CD4-positive, alpha-beta memory T cell (primary cell): ENCODE measurements at regions of chr17 and their contacts with region 1.

Region 1: DNA sequence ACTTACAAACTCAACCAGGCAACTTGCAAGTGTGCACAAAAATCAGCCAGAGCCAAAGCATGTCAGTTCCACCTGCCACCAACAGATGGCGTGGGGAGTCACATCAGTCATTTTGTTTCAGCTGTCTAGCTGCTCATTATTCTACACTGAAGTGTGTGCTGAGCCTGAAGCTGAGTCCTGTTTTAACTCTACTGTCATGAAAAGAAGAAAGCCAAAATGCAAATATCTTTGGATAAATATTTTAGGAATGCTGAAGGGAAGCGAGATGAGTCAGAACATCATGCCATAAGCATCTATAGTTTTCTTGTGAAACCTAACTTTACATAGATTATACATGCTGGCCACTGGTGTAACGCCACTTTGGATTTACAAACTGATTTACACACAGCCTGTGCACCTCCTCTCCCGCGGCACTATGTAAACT is 172.6 kb downstream of the CDK5R1 start:
- DNase-seq: peak; percentile 38 to 49 (median 46)
- H3K4me3 ChIP-seq: no peak overlapping the region
- H3K4me3 Mint-ChIP-seq: no peak overlapping the region
- H3K27ac ChIP-seq: no peak overlapping the region
- H3K27ac Mint-ChIP-seq: no peak overlapping the region
- H3K4me1 ChIP-seq: no peaks in the 10 kb centered on the region
- H3K4me1 Mint-ChIP-seq: no peaks in the 10 kb centered on the region
- H3K27me3 ChIP-seq: no peaks in the 10 kb centered on the region
- H3K27me3 Mint-ChIP-seq: no peaks in the 10 kb centered on the region

Region 2: DNA sequence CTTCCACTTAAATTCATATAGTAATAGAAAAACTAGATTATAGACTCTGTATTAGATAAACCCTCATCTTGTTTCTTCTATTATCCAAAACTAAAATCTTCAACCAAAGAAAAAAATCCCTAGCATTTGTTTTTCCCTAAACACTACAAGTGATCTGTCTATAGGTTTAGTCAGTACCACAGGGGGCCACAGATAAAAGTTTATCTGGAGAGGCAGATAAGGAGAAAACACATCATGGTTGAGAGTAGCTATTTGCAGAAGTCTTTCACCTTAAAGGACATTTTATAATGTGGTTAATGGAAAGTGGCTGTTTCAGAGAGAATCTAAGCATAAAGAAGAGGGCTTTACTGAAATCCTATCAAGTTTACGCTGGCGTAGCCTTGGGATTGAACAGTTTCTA is 12.5 kb before region 1 on chr17:
- CTCF ChIA-PET with region 1: interaction called, 13 read pairs
- POLR2A ChIA-PET with region 1: no interaction called
- intact Hi-C with region 1: no loop called
- DNase-seq: no peak
- H3K4me3 ChIP-seq: no peak overlapping the region
- H3K4me3 Mint-ChIP-seq: no peak overlapping the region
- H3K27ac ChIP-seq: no peak overlapping the region
- H3K27ac Mint-ChIP-seq: no peak overlapping the region
- H3K4me1 ChIP-seq: no peaks in the 10 kb centered on the region
- H3K4me1 Mint-ChIP-seq: no peaks in the 10 kb centered on the region
- H3K27me3 ChIP-seq: no peaks in the 10 kb centered on the region
- H3K27me3 Mint-ChIP-seq: no peaks in the 10 kb centered on the region

Region 3: DNA sequence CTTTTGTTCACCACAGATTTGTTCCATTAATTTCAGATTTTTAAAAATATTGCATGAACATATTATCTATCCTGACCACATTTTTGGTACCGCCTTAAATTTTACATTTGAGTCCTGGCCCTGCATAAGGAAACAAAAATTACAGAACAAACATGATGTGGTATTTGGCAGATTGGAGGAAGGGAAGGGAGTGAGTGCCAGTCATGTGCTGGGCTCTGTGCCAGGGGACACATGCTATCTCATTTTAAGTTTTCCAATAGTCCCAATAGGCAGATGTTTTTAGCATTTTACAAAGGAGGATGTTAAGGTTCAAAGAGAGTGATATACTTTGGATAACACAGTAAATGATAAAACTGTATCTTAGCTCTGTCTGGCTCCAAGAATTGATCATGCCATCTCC is 12.5 kb after region 1 on chr17:
- CTCF ChIA-PET with region 1: interaction called, 14 read pairs
- POLR2A ChIA-PET with region 1: no interaction called
- intact Hi-C with region 1: no loop called
- DNase-seq: no peak
- H3K4me3 ChIP-seq: no peak overlapping the region
- H3K4me3 Mint-ChIP-seq: no peak overlapping the region
- H3K27ac ChIP-seq: no peak overlapping the region
- H3K27ac Mint-ChIP-seq: no peak overlapping the region
- H3K4me1 ChIP-seq: no peaks in the 10 kb centered on the region
- H3K4me1 Mint-ChIP-seq: no peaks in the 10 kb centered on the region
- H3K27me3 ChIP-seq: no peaks in the 10 kb centered on the region
- H3K27me3 Mint-ChIP-seq: no peaks in the 10 kb centered on the region

Region 4: DNA sequence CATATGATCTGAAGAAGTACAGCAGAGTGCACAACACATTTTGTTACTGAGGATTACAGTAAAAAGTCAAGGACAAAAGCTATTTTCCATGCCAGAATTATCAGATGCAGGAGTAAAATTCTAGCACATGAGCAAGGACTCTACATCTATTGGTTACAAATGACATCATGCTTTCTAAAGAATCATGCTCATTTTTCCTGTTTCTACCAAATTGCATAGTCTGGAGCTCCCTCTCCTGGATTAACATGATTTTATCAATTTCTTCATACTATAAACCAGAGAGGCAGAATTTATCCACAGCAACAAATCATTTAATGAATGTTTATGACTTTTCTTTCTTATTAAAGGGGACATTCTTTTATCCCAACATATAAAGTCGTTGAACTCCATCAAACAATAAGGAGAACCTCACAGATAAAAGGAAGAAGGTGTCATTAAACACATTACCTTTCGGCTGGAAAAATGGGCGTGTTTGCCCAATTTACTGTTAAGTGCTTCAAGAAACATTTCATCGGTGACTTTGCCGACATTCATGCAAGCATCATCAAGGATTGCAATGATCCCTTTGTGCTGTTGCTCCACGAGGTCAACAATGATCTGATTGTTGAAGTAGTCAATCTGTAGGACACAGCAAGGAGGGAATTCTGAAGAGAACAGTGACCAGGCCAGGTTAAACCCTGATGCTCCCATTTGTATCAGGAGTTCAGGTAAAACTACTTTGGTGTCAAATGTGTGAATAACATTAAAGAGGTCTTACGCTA is 95.8 kb after region 1 on chr17:
- CTCF ChIA-PET with region 1: interaction called, 13 read pairs
- POLR2A ChIA-PET with region 1: no interaction called
- intact Hi-C with region 1: loop called (anchors 2 kb)
- DNase-seq: peak in 4 of 5 donors; percentile 51 to 57 (median 52)
- H3K4me3 ChIP-seq: no peak overlapping the region
- H3K4me3 Mint-ChIP-seq: no peak overlapping the region
- H3K27ac ChIP-seq: no peak overlapping the region
- H3K27ac Mint-ChIP-seq: peak overlapping the region in 1 of 7 donors; percentile 30
- H3K4me1 ChIP-seq: peaks cover 13% of the 10 kb centered on the region
- H3K4me1 Mint-ChIP-seq: peaks cover 9 to 13% (median 13%) of the 10 kb centered on the region in 4 donors
- H3K27me3 ChIP-seq: no peaks in the 10 kb centered on the region
- H3K27me3 Mint-ChIP-seq: no peaks in the 10 kb centered on the region